Left lung (tissue), 14 donors: ENCODE measurements at regions of chr12 and their contacts with region 1.

Region 1: GRCh38 chr12:6953442-6954315 is 2.5 kb downstream of the PTPN6 start:
- DNase-seq: peak in 2 of 4 donors; percentile 83 to 90
- ATAC-seq: peak; percentile 65
- H3K4me3 ChIP-seq: peak overlapping the region; percentile 23 to 69
- H3K27ac ChIP-seq: peak overlapping the region; percentile 82 to 93
- H3K4me1 ChIP-seq: peaks cover 5 to 74% of the 10 kb centered on the region in 2 donors
- H3K27me3 ChIP-seq: no peaks in the 10 kb centered on the region
- CTCF ChIP-seq: no peak

Region 2: GRCh38 chr12:7113389-7113871 is 159.8 kb after region 1 on chr12:
- intact Hi-C with region 1: loop called in 1 of 2 experiments (anchors 10 kb)
- DNase-seq: peak in 2 of 4 donors; percentile 29 to 37
- ATAC-seq: peak; percentile 27
- H3K4me3 ChIP-seq: no peak overlapping the region
- H3K27ac ChIP-seq: no peak overlapping the region
- H3K4me1 ChIP-seq: peaks cover 3 to 36% of the 10 kb centered on the region in 2 donors
- H3K27me3 ChIP-seq: no peaks in the 10 kb centered on the region
- CTCF ChIP-seq: peak; percentile 80 to 95